ENCODE measurements at regions of chr11 and their contacts with region 1.

Region 1: GRCh38 chr11:66311965-66312548 is 4.8 kb downstream of the CD248 start:
- DNase-seq: peak; percentile 72 to 98 (median 86)

Region 2: GRCh38 chr11:66328307-66329144 is 16.5 kb after region 1 on chr11:
- intact Hi-C with region 1: loop called (anchors 1 kb)
- DNase-seq: peak; percentile 64 to 97 (median 80)

Region 3: DNA sequence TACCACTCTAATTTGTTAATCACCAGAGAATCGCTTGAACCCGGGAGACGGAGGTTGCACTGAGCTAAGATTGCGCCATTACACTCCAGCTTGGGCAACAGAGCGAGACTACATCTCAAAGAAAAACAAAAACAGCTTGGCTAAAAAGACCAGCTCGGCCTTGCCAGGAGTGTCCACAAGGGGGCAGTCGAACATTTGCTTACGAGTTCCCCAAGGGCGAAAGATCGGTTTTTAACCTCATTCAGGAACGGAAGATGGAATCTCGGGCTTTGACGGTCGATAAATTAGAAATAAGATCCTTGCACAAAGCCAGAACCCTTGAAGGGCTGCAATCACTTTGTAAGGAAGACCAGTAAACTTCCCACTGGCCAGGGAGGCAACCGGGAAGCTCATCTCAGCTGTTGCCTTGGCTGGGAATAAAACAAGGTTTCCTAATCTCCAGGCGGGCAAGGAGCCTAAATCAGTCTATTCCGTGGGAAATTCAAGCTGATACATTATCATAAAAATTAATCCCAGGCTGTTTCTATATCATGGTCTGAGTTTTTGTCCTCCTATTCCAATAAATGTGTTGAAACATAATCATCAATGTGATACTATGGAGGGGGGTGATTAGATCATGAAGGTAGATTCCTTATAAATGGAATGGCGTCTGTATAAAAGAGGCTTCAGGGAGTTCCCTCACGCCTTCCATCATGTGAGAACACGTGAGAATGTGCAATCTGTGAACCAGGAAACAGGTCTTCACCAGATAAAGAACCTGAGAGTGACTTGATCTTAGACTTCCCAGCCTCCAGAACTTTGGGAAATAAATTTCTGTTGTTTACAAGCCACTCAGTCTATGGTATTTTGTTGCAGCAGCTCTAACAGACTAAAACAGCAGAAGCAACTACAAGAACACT is 74.4 kb after region 1 on chr11:
- intact Hi-C with region 1: loop called (anchors 5 kb)
- DNase-seq: peak; percentile 67 to 96 (median 86)

Measured in posterior cingulate gyrus (tissue), 11 donors.